ENCODE measurements at regions of chr12 and their contacts with region 1.

Region 1: GRCh38 chr12:109899783-109900751 is at the start of gene TCHP:
- DNase-seq: peak; percentile 60 to 91
- ATAC-seq: peak; percentile 88 to 94 (median 92)
- H3K4me3 ChIP-seq: peak within 1 kb of the TSS; percentile 77
- H3K4me3 Mint-ChIP-seq: peak within 1 kb of the TSS; percentile 99
- H3K27ac ChIP-seq: peak within 1 kb of the TSS; percentile 78
- H3K27ac Mint-ChIP-seq: peak within 1 kb of the TSS; percentile 95 to 96
- H3K4me1 ChIP-seq: peaks cover 24% of the 10 kb centered on the region
- H3K4me1 Mint-ChIP-seq: peaks cover 25 to 31% of the 10 kb centered on the region in 2 donors
- H3K27me3 ChIP-seq: no peaks in the 10 kb centered on the region
- H3K27me3 Mint-ChIP-seq: no peaks in the 10 kb centered on the region
- CTCF ChIP-seq: no peak
- total RNA-seq, gene TCHP: 33.7 to 42.5 (median 38.7) TPM

Region 2: GRCh38 chr12:109369831-109370230 is 530.2 kb before region 1 on chr12:
- intact Hi-C with region 1: no loop called
- DNase-seq: no peak
- ATAC-seq: no peak
- H3K4me3 ChIP-seq: no peak overlapping the region
- H3K4me3 Mint-ChIP-seq: no peak overlapping the region
- H3K27ac ChIP-seq: no peak overlapping the region
- H3K27ac Mint-ChIP-seq: no peak overlapping the region
- H3K4me1 ChIP-seq: no peaks in the 10 kb centered on the region
- H3K4me1 Mint-ChIP-seq: no peaks in the 10 kb centered on the region
- H3K27me3 ChIP-seq: no peaks in the 10 kb centered on the region
- H3K27me3 Mint-ChIP-seq: peaks cover 5 to 43% of the 10 kb centered on the region in 2 donors
- CTCF ChIP-seq: no peak

Region 3: GRCh38 chr12:109880016-109880931 is 19.8 kb before region 1 on chr12 and contains the start of gene GLTP:
- intact Hi-C with region 1: loop called (anchors 2 kb)
- DNase-seq: peak; percentile 92 to 96
- ATAC-seq: peak; percentile 96 to 99 (median 96)
- H3K4me3 ChIP-seq: peak within 1 kb of the TSS; percentile 96
- H3K4me3 Mint-ChIP-seq: peak within 1 kb of the TSS; percentile 95
- H3K27ac ChIP-seq: peak within 1 kb of the TSS; percentile 95
- H3K27ac Mint-ChIP-seq: peak within 1 kb of the TSS; percentile 80 to 97
- H3K4me1 ChIP-seq: peaks cover 42% of the 10 kb centered on the region
- H3K4me1 Mint-ChIP-seq: peaks cover 48 to 55% of the 10 kb centered on the region in 2 donors
- H3K27me3 ChIP-seq: no peaks in the 10 kb centered on the region
- H3K27me3 Mint-ChIP-seq: no peaks in the 10 kb centered on the region
- CTCF ChIP-seq: peak; percentile 57
- total RNA-seq, gene GLTP: 48.6 to 52.8 (median 49.2) TPM

Region 4: GRCh38 chr12:110256780-110257431 is 356.8 kb after region 1 on chr12:
- intact Hi-C with region 1: no loop called
- DNase-seq: no peak
- ATAC-seq: peak in 2 of 3 donors; percentile 68 to 91
- H3K4me3 ChIP-seq: no peak overlapping the region
- H3K4me3 Mint-ChIP-seq: no peak overlapping the region
- H3K27ac ChIP-seq: no peak overlapping the region
- H3K27ac Mint-ChIP-seq: peak overlapping the region in 1 of 2 donors; percentile 20
- H3K4me1 ChIP-seq: peaks cover 7% of the 10 kb centered on the region
- H3K4me1 Mint-ChIP-seq: peaks cover 0 to 5% of the 10 kb centered on the region in 2 donors
- H3K27me3 ChIP-seq: no peaks in the 10 kb centered on the region
- H3K27me3 Mint-ChIP-seq: no peaks in the 10 kb centered on the region
- CTCF ChIP-seq: no peak

Measured in natural killer cell (primary cell).